G401 (cell line): ENCODE measurements at regions of chr2 and their contacts with region 1.

Region 1: DNA sequence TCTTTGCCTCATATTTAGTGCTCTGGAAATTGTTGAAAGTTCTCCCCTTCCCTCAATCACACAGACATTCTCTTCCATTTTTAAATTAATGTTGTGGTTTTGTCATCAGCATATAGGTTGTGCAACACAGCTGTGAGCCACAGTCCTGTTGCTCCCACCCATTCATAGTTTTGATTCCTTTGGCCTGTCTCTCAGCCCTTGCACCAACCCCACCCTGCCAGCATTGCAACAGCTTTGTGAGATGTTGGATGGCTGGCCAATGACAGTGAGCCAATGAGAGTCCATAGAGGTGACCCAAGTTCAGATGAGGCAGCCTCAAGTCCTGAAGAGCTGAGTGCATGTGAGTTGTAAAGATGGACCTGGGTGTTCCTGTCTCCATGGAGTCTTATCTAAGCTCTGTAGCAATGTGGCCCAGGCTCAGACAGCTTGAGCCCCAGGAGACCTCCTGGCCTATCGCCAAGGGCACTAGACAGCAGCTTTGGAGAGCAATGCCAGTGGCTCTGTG is 775.5 kb downstream of the RNF144A start:
- DNase-seq: no peak

Region 2: GRCh38 chr2:7427293-7428060 is 265.2 kb before region 1 on chr2:
- in situ Hi-C with region 1: loop called (anchors 25 kb)
- DNase-seq: peak; percentile 63

Region 3: DNA sequence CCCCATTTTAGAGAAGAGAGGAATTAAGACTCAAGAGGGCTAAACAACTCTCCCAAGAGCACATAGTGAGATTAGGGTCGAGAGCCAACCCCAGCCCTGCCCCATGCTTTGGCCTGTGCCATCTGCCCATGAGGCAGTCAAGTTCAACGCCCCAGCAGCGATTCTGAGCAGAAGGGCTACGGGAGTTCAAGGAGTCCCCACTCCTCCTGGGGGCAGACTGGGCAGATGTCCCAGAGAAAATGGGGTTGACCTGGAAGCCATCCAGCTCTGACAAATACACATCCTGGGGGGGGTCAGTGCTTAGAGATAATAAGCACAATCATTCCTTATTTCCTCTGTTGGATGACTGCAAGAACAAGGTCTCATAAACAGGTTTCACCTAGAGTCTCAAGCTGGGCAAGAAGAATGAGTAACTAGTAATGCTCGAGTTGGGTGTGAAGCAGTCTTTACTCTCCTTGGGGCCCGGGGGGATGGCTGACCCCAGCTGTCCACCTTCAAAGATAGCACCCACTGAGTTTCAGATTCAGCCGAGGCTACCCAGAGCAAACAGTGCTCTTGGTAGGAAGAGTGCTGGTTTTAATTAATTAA is 59.0 kb before region 1 on chr2:
- in situ Hi-C with region 1: no loop called
- DNase-seq: no peak

Region 4: DNA sequence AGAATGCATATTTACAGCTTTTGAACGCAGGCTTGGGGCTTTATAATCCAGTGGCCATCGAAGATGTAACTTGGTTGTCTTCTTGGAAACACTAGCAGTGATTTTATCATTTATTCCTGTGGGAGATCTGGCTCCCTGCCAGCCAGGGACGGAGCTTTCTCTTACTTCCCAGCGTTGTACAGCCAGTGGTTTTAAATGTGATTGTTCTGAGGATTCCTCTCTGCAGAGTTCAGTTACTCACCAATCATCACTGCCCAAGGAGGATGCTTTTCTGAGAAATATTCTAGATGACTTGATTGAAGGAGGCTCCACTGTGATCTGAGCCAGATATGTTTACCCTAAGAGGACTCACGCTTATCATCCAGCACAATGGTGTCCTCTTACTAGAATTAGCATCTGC is 31.2 kb before region 1 on chr2:
- in situ Hi-C with region 1: no loop called
- DNase-seq: no peak

Region 5: DNA sequence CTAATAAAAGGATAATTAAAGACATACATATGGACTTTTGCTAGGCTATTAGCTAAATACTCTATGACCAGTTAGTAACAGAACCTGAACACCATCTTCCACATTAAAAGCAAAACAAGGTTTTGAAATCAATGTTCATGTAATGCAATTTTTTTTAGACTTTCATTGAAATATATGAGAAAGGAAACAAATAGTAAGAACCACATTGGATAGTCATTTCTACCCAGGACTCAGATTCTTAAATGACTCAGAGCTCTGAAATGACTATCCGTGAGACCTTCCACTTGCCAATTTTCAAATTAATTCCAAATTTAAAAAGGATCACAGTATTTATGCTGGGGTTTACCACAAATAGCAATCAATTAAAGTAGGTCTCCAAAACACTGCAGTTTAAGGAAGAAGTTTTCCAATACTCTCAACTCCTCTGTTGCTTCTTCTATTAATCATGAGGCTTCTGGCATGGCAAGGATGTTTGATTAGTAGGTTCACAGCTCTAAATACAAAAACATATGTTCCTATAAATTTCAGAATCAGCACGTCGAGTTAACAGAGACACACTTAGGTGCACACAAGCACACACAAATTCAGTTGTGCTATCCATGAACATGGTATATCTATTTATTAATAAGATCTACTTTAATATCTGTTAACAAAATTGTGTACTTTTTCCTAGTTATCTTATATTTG is 65.5 kb after region 1 on chr2:
- in situ Hi-C with region 1: no loop called
- DNase-seq: no peak

Region 6: DNA sequence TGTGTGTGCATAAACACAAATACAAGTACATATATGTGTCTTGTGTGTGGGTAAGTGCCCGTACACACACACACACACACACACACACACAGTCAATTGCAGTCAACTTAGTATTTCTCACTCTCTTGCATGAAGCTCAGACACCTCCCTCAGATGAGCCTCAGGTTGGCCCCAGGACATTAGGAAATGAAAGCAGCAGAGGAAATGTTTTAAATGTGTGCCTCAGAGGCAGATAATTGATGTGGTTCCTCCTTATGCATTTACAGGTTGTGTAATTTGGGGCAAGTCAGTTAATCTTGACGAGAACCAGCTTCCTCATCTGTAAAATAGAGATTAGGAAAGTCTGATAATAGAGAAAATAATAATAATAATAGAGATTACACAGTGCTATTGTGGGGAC is 175.2 kb after region 1 on chr2:
- in situ Hi-C with region 1: no loop called
- DNase-seq: no peak